Right lobe of liver (tissue), 6 donors: ENCODE measurements at regions of chr17 and their contacts with region 1.

Region 1: GRCh38 chr17:20095336-20096080 is 86.3 kb downstream of the SPECC1 start:
- DNase-seq: peak in 1 of 3 donors; percentile 36
- ATAC-seq: peak; percentile 25 to 41 (median 34)
- H3K4me3 ChIP-seq: no peak overlapping the region
- H3K27ac ChIP-seq: no peak overlapping the region
- H3K4me1 ChIP-seq: no peaks in the 10 kb centered on the region
- H3K27me3 ChIP-seq: no peaks in the 10 kb centered on the region
- CTCF ChIP-seq: peak in 2 of 4 donors; percentile 11 to 23
- POLR2A ChIP-seq: no peak

Region 2: DNA sequence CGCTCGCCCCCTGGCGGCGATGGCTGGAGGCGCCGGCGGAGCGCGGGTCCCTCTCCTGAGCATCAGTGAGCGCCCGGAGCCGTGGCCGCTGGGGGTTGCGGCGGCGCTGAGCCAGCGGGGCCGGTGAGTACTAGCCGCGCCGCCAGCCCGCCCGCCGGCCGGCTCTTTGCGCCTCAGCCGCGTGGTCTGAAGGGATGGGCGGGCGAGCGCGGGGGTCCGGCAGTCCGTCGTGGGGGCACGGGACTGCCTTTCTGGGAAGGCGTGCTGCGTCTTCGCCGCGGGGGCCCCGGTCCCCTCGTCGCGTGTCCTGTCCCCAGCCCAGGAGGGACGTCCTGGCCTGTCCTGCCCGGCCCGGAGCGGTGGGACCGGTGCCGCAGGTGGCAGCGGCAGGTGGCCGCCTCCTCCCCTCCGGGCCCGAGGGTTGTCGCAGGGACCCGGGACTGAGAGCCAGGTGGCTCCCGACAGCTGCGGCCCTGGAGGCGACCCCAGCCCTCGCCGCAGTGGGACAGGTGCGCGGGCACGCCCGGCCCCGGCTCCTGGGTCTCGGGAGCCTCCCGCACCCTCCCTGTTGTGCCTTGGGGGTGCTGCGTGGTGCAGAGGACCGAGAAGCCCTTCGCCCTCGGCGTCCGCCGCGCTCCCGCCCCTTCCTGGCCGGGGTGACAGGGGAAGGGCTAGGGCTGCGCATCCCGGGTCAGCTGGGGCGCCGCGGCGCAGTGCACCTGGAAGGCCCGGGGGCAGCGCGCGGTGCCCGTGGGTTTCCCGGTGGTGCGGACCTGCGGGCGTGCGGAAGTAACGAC is 86.0 kb before region 1 on chr17 and contains the start of gene SPECC1:
- intact Hi-C with region 1: loop called in 1 of 2 experiments (anchors 10 kb)
- DNase-seq: peak; percentile 72 to 81 (median 77)
- ATAC-seq: peak; percentile 21 to 99 (median 96)
- H3K4me3 ChIP-seq: peak within 1 kb of the TSS; percentile 41 to 58 (median 46)
- H3K27ac ChIP-seq: no peak within 1 kb of the TSS
- H3K4me1 ChIP-seq: peaks cover 0 to 7% (median 0%) of the 10 kb centered on the region in 4 donors
- H3K27me3 ChIP-seq: peaks cover 0 to 11% of the 10 kb centered on the region in 2 donors
- CTCF ChIP-seq: peak; percentile 91 to 98 (median 97)
- POLR2A ChIP-seq: no peak
- total RNA-seq, gene SPECC1: 0.81 to 5.0 (median 2.8) TPM